ENCODE measurements at regions of chr11 and their contacts with region 1.

Region 1: GRCh38 chr11:78564490-78565467 is 9.9 kb downstream of the NARS2 start:
- DNase-seq: no peak
- H3K4me3 Mint-ChIP-seq: no peak overlapping the region
- H3K27ac Mint-ChIP-seq: no peak overlapping the region
- H3K4me1 Mint-ChIP-seq: peaks cover 28% of the 10 kb centered on the region
- H3K27me3 Mint-ChIP-seq: no peaks in the 10 kb centered on the region

Region 2: DNA sequence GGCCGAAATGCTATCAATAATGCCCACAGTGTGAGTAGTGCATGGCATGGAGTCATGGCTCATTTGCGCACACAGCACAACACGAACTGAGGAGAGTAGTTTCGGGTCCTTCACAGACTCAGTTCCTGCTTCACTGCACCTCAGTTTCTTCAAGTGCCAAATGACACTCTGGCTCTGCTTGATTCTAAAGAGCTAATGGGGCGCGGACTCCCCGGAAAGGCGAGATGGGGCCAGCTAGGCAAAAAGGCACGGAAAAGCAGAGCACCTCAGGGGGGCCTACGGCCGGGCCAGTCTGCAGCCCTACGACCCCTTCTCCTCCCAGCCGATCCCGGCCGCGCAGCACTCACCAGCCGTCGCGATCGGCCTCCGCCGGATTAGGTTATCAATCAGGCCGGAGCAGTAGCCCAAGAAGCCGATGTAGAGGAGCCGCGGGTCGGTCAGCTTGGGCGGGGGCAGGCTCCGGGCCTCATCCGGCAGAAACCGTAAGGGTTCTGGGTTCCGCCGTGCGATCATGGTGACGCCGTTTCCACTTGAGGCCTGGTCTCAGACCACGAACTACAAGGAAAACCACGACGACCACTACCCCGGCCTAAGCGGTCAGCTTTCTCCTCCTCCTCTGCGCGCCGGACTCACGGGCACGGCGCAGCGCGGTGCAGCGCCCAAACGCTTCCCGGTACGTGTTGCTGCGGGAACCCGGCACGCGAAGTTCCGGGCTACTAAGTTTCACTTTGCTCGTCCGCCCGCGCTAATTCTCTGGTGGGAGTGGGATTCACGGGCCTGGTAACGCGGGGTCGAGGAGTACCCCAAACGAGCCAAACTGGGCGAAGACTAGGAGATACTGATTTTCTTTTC is 485.3 kb before region 1 on chr11 and contains the start of gene NDUFC2:
- CTCF ChIA-PET with region 1: no interaction called
- POLR2A ChIA-PET with region 1: no interaction called
- intact Hi-C with region 1: loop called (anchors 5 kb)
- DNase-seq: peak; percentile 77
- H3K4me3 Mint-ChIP-seq: peak within 1 kb of the TSS; percentile 91
- H3K27ac Mint-ChIP-seq: peak within 1 kb of the TSS; percentile 83
- H3K4me1 Mint-ChIP-seq: peaks cover 40% of the 10 kb centered on the region
- H3K27me3 Mint-ChIP-seq: no peaks in the 10 kb centered on the region
- total RNA-seq, gene NDUFC2: 209 to 230 TPM

Region 3: DNA sequence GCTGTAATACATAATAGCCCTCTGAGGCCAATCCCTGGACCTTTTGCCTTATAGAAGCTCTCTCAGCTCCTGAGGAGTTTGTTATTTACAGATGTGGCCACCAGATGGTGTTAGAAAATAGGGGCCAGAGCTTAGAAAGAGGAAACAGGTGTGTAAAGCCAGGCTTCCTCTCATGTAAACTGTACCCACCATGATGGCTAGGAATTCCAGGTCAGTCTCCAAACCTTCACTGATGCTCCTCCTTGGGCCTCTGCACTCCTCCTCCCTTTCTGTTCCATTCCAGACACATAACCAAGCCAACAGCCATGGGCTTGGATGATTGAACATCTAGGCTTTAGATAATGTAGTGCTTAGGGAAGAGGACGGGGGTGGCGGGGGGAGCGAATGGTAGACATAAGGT is 336.3 kb before region 1 on chr11:
- CTCF ChIA-PET with region 1: interaction called, 28 read pairs
- POLR2A ChIA-PET with region 1: no interaction called
- intact Hi-C with region 1: loop called (anchors 1 kb)
- DNase-seq: peak; percentile 20
- H3K4me3 Mint-ChIP-seq: no peak overlapping the region
- H3K27ac Mint-ChIP-seq: no peak overlapping the region
- H3K4me1 Mint-ChIP-seq: peaks cover 15% of the 10 kb centered on the region
- H3K27me3 Mint-ChIP-seq: no peaks in the 10 kb centered on the region

Region 4: GRCh38 chr11:78432058-78432515 is 132.7 kb before region 1 on chr11:
- CTCF ChIA-PET with region 1: interaction called, 26 read pairs
- POLR2A ChIA-PET with region 1: no interaction called
- intact Hi-C with region 1: no loop called
- DNase-seq: no peak
- H3K4me3 Mint-ChIP-seq: no peak overlapping the region
- H3K27ac Mint-ChIP-seq: no peak overlapping the region
- H3K4me1 Mint-ChIP-seq: peaks cover 21% of the 10 kb centered on the region
- H3K27me3 Mint-ChIP-seq: no peaks in the 10 kb centered on the region

Region 5: DNA sequence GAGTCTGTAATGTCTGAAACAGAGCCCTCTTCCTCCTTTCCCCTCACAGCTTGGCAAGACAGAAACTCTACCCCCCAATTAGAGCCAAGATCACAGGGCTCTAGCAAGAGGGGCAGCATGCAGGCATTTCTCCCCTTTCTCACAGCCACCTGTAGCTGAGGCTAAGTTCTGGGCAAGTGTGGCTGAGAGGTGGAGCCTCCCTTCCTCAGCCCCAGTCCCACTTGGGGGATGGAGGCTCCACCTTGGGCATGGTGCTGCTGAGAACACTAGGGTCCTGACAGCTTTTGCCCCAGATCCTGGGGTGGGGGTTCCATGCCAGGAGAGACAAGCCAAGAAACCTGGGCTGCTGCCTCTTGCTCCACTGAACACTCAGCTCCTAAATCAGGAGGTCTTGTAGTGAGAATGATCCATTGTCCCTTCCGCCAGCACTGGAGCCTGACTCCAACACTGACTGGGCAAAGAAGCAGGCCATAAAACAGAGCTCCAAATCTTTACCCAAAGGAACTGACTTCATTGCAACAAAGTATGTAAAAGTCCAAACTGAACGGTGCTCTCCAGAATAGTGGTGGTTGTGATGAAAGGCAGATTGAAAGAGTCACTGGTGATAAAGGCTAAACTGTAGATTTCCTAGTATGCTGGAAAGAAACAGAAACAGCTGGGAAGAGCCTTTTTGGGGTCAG is 15.7 kb before region 1 on chr11:
- CTCF ChIA-PET with region 1: interaction called, 15 read pairs
- POLR2A ChIA-PET with region 1: no interaction called
- intact Hi-C with region 1: no loop called
- DNase-seq: no peak
- H3K4me3 Mint-ChIP-seq: no peak overlapping the region
- H3K27ac Mint-ChIP-seq: no peak overlapping the region
- H3K4me1 Mint-ChIP-seq: peaks cover 7% of the 10 kb centered on the region
- H3K27me3 Mint-ChIP-seq: no peaks in the 10 kb centered on the region

Region 6: GRCh38 chr11:78798660-78799059 is 233.9 kb after region 1 on chr11:
- CTCF ChIA-PET with region 1: no interaction called
- POLR2A ChIA-PET with region 1: no interaction called
- intact Hi-C with region 1: no loop called
- DNase-seq: peak; percentile 54
- H3K4me3 Mint-ChIP-seq: no peak overlapping the region
- H3K27ac Mint-ChIP-seq: no peak overlapping the region
- H3K4me1 Mint-ChIP-seq: no peaks in the 10 kb centered on the region
- H3K27me3 Mint-ChIP-seq: no peaks in the 10 kb centered on the region